GM10248 (cell line): ENCODE measurements at regions of chr22 and their contacts with region 1.

Region 1: DNA sequence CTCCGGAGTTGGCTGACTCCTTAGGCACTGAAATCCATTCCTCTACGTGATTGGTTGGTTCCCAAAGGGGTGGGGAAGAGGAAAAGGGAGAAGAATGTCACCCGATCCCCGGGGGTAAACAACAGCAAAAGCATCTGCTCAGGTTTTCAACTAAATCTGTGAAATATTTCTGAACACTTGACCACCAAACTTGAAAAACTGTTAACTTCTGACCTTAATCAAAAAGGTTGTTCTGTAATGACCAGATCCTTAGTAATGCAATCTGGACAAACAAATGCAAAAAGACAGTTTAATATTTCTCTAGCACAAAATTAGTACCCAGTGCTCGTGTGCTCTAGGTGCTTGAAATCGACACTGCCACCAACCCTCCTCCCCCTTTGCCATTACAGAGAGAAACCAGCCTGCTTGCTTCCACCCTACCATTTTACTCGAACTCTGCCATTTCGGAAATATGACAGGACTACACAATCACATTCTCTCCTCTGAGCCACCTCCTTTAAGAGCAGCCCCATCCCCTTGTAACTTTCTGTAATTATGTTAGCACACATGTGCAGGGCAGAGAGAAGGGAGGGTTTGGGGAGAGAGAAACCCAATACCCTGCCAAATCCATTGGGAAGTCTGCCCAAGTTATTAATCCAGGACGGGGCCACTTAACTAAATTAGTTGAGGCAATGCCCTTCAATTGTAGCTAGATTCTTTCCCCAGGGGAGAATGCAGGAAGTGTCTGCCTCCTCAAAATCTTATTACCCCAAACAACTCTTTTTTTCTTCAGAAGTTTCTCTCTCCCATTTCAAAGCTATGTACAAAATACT is 113.8 kb downstream of the RBFOX2 start:
- DNase-seq: no peak
- CTCF ChIP-seq: no peak

Region 2: DNA sequence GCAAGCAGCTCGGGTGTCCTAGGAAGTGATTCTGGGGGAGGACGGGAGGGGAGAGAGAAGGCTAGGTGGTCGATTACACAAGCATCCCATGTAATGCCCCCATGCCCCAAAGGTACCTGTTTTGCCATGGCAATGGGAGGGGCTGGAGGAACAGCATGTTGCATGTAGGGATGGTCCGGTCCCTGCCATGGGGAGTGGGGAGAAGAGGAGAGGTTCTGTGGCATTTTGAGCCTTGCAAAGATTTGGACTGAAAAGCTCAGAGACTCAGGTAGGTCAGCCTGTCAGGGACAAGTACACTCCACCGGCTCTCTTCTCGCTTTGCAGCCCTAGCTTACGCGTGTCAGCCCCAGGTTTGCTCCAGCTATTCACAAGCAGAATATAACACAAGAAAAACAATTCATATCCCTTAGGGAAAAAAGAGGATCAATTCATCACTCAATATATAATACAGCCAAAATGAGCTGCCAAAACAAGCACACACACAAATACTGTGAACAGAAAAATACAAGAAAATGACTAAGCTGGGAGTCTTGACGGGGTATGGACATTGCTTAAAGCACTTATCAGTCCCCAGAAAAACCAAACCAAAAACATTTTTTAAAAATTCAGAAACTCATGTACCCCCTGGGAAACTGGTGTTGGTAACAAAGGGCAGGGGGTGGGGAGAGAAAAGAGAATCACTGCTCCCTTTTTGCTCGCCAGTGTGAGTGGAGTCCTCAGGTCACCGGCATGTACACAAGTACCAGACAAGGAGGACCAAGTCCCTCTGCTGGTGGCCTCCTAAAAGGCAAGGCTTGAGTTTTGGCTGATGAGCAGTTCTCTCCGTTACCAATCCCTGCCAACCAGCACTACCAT is 175.6 kb before region 1 on chr22:
- CTCF ChIA-PET with region 1: no interaction called
- POLR2A ChIA-PET with region 1: no interaction called
- DNase-seq: no peak
- CTCF ChIP-seq: no peak

Region 3: DNA sequence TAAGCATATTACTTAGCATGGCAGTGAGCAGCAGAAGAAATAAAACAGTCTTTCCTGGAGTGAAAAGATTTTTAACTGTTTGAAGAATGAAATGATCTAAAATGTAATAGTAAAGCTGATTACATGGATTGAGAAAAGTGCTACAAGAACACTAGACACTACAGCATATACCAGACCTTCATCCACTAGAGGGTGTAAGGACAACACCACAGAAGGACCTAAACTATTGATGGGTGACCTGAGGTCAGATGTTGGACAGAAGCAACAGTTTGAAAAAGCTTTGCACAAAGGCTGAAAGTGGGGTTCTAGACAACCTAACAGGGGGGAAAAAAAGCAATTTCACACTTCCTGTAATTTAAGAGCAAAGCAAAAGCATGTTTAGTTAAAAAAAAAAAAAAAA is 16.1 kb after region 1 on chr22:
- CTCF ChIA-PET with region 1: interaction called, 10 read pairs
- POLR2A ChIA-PET with region 1: no interaction called
- DNase-seq: peak; percentile 41
- CTCF ChIP-seq: peak; percentile 54